ENCODE measurements at regions of chr1 and their contacts with region 1.

Region 1: GRCh38 chr1:78004719-78005447 is at the start of gene DNAJB4:
- DNase-seq: peak; percentile 77
- H3K4me3 Mint-ChIP-seq: peak within 1 kb of the TSS; percentile 90
- H3K27ac Mint-ChIP-seq: peak within 1 kb of the TSS; percentile 98
- H3K4me1 Mint-ChIP-seq: peaks cover 40% of the 10 kb centered on the region
- H3K27me3 Mint-ChIP-seq: no peaks in the 10 kb centered on the region

Region 2: DNA sequence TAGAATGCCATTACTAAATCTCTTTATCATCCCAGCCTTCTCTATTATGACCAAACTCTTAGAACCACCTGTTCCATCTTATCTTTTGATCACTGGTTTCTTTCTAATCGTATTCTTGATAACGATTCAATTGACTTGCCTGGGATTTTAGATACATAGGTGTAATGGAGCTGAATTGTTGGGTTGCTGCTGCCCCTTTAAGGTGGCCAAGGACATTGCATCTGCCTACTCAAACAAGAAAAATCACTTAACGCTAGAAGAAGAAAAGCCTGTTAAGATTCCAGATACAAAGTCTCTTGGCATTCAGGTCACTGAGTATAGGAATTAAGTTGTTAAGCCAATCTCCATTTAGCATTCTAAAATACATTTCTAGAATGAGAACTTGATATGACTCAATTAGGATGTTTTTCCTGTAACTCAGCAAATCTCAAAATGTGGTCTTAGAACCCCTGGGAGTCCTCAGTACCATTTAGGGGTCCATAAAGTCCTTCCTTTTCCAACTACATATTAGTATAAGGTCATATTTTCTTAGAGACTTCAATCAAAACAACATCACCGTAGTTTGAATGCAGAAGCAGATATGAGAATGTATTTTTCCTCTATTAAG is 104.1 kb before region 1 on chr1:
- CTCF ChIA-PET with region 1: no interaction called
- DNase-seq: peak; percentile 40
- H3K4me3 Mint-ChIP-seq: no peak overlapping the region
- H3K27ac Mint-ChIP-seq: no peak overlapping the region
- H3K4me1 Mint-ChIP-seq: no peaks in the 10 kb centered on the region
- H3K27me3 Mint-ChIP-seq: peaks cover 4% of the 10 kb centered on the region

Region 3: DNA sequence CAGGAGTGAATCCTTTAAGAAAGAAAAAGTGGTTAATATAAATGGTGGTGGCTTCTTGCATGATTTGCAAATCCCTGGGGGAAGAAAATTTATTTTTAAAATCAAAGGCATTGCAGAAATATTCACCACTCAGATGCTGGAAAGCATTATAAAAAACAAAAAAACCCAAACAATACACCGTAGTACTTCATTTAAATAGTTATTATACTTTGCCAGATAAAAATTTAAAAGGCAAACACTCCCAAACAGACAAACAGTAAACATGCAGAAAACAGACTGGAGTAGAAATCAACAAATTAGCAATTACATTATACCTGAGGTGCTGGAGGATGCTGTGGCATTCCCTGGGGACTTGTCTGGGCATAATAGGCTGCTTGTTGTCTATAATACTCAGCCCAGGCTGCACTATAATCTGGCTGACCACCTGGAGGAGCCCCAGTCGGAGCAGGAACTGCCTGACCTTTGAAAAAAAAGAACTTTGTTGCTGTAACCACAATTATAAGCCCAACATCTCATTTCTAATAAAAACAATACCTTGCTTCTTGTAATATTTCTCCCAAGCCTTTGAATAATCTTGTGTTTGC is 56.0 kb before region 1 on chr1:
- CTCF ChIA-PET with region 1: no interaction called
- DNase-seq: no peak
- H3K4me3 Mint-ChIP-seq: no peak overlapping the region
- H3K27ac Mint-ChIP-seq: no peak overlapping the region
- H3K4me1 Mint-ChIP-seq: peaks cover 14% of the 10 kb centered on the region
- H3K27me3 Mint-ChIP-seq: no peaks in the 10 kb centered on the region

Region 4: DNA sequence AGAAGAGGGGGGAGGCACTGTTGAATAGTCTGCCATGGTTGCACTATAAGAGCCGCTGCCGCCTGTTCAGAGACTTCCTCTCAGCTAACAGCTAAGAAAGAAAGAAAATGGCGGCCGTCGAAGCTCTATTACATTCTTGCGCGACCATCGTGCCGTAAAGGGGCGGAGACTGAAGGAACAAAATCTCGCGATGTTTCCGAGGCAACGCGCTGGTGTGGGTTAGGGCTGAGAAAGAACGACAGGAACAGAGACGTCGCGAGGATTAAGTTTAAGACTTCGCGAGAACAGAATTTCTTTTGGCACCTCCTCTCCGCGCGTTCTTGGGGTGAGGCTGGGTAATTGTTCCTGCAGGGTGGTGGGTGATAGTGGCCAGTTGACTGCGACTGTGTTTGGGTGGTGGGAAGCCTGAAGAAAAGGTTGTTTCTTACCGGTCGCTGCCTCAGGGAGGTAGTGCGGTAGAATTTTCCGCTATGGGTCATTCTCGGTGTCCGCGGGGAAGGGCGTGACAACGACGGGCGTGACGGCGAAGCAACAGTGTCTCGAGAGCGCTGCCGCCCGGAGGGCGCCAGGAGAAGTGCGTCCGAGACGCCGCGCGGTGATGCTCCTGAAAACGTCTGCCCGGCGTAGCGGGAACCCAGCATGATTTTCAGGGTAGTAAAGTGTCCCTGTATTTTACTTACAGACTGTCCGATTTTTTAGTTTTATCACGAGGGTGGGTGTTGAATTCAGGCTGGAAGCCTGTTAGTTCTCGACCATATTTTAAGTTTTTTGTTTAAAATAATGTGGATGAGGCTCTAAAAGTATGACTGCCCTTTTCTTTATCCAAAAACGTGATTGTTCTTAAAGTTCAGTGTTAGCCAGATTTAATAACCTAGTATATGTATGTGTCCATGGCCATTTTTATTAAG is 25.7 kb before region 1 on chr1 and contains the start of gene FUBP1:
- CTCF ChIA-PET with region 1: interaction called, 10 read pairs
- DNase-seq: peak; percentile 97
- H3K4me3 Mint-ChIP-seq: no peak within 1 kb of the TSS
- H3K27ac Mint-ChIP-seq: no peak within 1 kb of the TSS
- H3K4me1 Mint-ChIP-seq: peaks cover 45% of the 10 kb centered on the region
- H3K27me3 Mint-ChIP-seq: no peaks in the 10 kb centered on the region

Region 5: DNA sequence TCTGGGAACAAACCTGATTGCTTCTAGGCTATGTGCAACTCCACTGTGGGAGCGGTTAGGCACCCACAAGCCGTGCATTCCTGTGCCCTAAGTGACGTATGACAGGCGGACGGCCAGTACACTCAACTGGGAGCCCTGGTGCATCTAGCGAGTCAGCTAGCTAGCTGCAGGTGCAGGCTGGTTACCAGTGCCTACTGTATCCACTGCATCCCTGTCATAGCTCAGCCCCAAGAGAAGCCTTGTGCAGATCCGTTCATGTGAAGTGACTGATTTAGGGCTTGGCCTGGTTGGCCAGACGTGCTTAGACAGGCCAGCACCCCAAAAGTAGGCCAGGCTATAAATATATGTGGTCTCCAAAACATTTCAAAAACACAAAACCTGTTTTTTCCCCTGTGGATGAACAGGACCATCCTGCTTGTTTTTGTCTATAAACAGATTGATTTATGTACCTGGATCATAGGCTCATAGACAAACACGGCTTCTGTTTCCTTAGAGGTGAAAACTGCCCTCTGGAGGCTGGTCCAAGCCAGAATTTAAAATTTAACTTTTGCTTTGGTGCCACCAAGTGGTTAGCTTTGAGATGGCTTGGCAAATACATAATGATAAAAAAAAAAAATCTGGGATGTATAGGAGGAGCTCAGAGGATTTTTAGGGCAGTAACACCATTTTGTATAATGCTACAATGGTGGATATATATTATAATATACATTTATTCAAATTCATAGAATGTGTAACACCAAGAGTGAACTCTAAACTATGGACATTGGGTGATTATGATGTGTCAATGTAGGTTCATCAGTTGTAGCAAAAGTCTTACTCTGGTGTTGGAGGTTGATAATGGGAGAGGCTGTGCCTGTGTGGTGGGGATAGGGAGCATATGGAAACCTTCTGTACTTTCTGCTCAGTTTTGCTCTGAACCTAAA is 109.4 kb after region 1 on chr1:
- CTCF ChIA-PET with region 1: interaction called, 11 read pairs
- DNase-seq: peak; percentile 66
- H3K4me3 Mint-ChIP-seq: no peak overlapping the region
- H3K27ac Mint-ChIP-seq: no peak overlapping the region
- H3K4me1 Mint-ChIP-seq: no peaks in the 10 kb centered on the region
- H3K27me3 Mint-ChIP-seq: peaks cover 6% of the 10 kb centered on the region